ENCODE measurements at regions of chr12 and their contacts with region 1.

Region 1: GRCh38 chr12:125330645-125331341 is 265.6 kb downstream of the AACS start:
- DNase-seq: peak; percentile 80
- ATAC-seq: peak; percentile 98

Region 2: DNA sequence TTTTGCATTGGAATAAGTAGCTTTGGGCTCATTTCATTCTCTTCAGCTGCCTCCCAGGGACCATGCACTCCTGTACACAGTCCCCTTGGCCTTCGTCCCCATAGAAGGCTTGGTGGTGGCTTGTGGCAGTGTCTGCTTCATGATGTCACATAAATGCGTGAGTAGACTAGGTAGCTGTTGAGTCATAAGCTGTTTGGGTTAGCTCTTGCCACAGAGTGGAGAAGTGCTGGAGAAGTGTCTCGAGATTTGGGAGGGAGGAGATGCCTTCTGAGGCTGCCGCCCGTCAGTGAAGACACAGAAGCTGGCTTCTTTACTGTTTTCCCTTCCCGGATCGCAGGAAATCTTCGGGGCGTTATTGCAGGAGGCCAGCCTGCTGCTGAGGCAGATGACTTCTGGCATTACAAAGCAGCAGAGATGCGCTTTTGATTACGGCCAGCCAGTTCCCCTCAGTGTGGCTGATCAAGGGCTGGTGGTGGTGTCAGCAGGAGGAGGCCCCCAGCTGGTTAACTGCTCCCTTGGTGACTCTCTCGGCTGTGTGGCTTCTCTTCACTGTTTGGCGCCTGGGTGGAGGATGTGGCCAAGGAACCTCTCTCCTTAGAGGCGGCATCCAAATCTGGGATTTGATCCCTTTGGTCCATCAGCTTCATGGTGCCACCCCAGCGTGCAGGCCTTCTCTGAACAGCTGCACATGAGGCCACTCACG is 197.9 kb before region 1 on chr12:
- intact Hi-C with region 1: no loop called
- DNase-seq: no peak
- ATAC-seq: no peak

Region 3: GRCh38 chr12:125402874-125403789 is 72.3 kb after region 1 on chr12:
- intact Hi-C with region 1: loop called (anchors 10 kb)
- DNase-seq: no peak
- ATAC-seq: no peak

Region 4: DNA sequence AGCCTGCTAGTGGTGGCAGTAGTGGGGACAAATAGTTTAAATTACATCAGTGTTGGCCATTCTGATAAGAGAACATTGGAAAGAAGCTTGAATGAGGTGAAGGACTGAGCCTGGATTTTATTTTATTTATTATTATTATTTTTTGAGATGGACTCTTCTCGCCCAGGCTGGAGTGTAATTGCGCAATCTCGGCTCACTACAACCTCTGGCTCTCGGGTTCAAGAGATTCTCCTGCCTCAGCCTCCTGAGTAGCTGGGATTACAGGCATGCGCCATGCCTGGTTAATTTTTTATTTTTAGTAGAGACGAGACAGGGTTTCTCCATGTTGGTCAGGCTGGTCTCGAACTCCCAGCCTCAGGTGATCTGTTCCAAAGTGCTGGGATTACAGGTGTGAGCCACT is 473.9 kb after region 1 on chr12:
- intact Hi-C with region 1: no loop called
- DNase-seq: no peak
- ATAC-seq: no peak